ENCODE measurements at regions of chr1 and their contacts with region 1.

Region 1: GRCh38 chr1:36223993-36224536 is at the start of gene THRAP3:
- DNase-seq: peak; percentile 98
- H3K4me3 ChIP-seq: peak within 1 kb of the TSS; percentile 58
- H3K4me3 Mint-ChIP-seq: peak within 1 kb of the TSS; percentile 99
- H3K27ac Mint-ChIP-seq: peak within 1 kb of the TSS; percentile 98
- H3K4me1 ChIP-seq: peaks cover 5% of the 10 kb centered on the region; the same call in 1 of the 2 replicates
- H3K4me1 Mint-ChIP-seq: peaks cover 7% of the 10 kb centered on the region
- H3K27me3 ChIP-seq: no peaks in the 10 kb centered on the region
- H3K27me3 Mint-ChIP-seq: no peaks in the 10 kb centered on the region
- CTCF ChIP-seq: no peak
- total RNA-seq, gene THRAP3: 86.8 and 89.1 TPM in 2 replicates

Region 2: DNA sequence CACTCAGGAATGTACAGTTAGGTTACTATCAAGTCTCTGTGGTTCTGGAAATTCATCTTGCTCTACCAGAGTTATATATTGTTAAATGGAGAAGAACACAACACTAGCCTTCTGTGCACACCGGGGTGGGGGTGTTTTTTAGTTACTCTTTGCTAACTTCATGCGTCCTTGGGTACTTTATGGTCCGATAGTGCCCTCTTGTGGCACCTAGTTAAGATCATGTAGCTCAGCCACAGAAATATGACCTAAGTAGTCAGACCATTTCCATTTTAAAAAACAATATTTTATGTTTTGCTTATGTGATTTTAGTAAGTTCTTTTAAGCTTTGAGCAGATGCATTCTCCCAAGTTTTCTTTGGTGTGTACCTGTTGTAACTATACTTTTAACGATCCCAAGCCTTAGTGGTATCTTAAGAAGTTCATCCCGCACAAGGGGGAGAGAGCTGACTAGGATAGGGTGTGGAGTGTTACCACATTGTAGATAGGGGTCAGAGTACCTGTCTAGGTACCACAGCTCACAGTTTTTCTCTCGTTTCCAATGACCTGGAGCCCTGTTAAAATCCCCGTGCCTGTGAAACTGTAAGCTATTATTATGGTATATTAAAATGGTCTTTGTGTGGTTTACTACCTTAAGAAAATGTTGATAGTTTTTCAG is 61.5 kb after region 1 on chr1:
- CTCF ChIA-PET with region 1: interaction called, 11 read pairs
- POLR2A ChIA-PET with region 1: no interaction called
- intact Hi-C with region 1: loop called (anchors 1 kb)
- DNase-seq: peak; percentile 52 to 58
- H3K4me3 ChIP-seq: no peak overlapping the region
- H3K4me3 Mint-ChIP-seq: no peak overlapping the region
- H3K27ac Mint-ChIP-seq: no peak overlapping the region
- H3K4me1 ChIP-seq: no peaks in the 10 kb centered on the region
- H3K4me1 Mint-ChIP-seq: no peaks in the 10 kb centered on the region
- H3K27me3 ChIP-seq: no peaks in the 10 kb centered on the region
- H3K27me3 Mint-ChIP-seq: no peaks in the 10 kb centered on the region
- CTCF ChIP-seq: peak; percentile 45 to 62

Region 3: GRCh38 chr1:36385410-36386257 is 161.6 kb after region 1 on chr1 and contains the start of gene STK40:
- CTCF ChIA-PET with region 1: no interaction called
- POLR2A ChIA-PET with region 1: interaction called, 9 read pairs
- intact Hi-C with region 1: loop called (anchors 10 kb)
- DNase-seq: peak; percentile 94 to 98
- H3K4me3 ChIP-seq: peak within 1 kb of the TSS; percentile 76
- H3K4me3 Mint-ChIP-seq: peak within 1 kb of the TSS; percentile 79
- H3K27ac Mint-ChIP-seq: peak within 1 kb of the TSS; percentile 100
- H3K4me1 ChIP-seq: peaks cover 16% of the 10 kb centered on the region; the same call in 1 of the 2 replicates
- H3K4me1 Mint-ChIP-seq: peaks cover 33% of the 10 kb centered on the region
- H3K27me3 ChIP-seq: no peaks in the 10 kb centered on the region
- H3K27me3 Mint-ChIP-seq: no peaks in the 10 kb centered on the region
- CTCF ChIP-seq: no peak
- total RNA-seq, gene STK40: 26.7 and 29.7 TPM in 2 replicates

Measured in Caco-2 (cell line).